ENCODE measurements at regions of chr5 and their contacts with region 1.

Region 1: GRCh38 chr5:62460578-62460983 is 48.0 kb downstream of the IPO11 start:
- DNase-seq: no peak
- ATAC-seq: peak; percentile 53
- H3K4me3 Mint-ChIP-seq: no peak overlapping the region
- H3K27ac Mint-ChIP-seq: no peak overlapping the region
- H3K4me1 Mint-ChIP-seq: no peaks in the 10 kb centered on the region
- H3K27me3 Mint-ChIP-seq: no peaks in the 10 kb centered on the region
- CTCF ChIP-seq: peak; percentile 88

Region 2: GRCh38 chr5:62341783-62342475 is 118.7 kb before region 1 on chr5:
- CTCF ChIA-PET with region 1: no interaction called
- POLR2A ChIA-PET with region 1: no interaction called
- intact Hi-C with region 1: no loop called
- DNase-seq: peak; percentile 44
- ATAC-seq: peak; percentile 75
- H3K4me3 Mint-ChIP-seq: peak overlapping the region; percentile 45
- H3K27ac Mint-ChIP-seq: peak overlapping the region; percentile 92
- H3K4me1 Mint-ChIP-seq: peaks cover 58% of the 10 kb centered on the region
- H3K27me3 Mint-ChIP-seq: no peaks in the 10 kb centered on the region
- CTCF ChIP-seq: no peak

Region 3: DNA sequence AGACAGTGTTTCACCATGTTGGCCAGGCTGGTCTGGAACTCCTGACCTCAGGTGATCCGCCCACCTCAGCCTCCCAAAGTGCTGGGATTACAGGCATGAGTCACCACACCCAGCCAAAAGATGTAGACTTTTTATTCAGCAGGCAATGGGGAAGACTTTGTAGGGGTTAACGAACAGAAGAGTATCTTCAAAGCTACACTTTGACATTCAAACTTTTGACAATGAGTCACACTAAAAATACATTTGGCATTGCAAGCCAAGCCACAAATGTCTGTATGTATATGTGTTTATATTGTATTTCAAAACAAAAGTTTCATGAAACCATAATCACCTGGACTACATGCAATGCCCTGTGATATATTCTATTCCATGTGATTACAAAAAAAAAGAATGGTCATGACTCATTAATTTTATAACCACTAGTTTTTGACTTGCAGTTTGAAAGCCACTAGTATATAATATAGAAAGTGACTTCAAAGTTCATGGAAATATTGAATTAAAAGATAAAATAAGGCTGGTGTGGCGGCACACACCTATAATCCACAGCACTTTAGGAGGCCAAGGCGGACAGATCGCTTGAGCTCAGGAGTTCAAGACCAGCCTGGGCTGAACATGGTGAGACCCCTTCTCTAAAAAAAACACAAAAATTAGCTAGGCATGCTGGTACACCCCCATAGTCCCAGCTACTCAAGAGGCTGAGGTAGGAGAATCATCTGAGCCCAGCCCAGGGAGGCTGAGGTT is 65.2 kb before region 1 on chr5:
- CTCF ChIA-PET with region 1: no interaction called
- POLR2A ChIA-PET with region 1: no interaction called
- intact Hi-C with region 1: no loop called
- DNase-seq: peak; percentile 55
- ATAC-seq: peak; percentile 74
- H3K4me3 Mint-ChIP-seq: no peak overlapping the region
- H3K27ac Mint-ChIP-seq: peak overlapping the region; percentile 88
- H3K4me1 Mint-ChIP-seq: peaks cover 56% of the 10 kb centered on the region
- H3K27me3 Mint-ChIP-seq: no peaks in the 10 kb centered on the region
- CTCF ChIP-seq: no peak

Region 4: DNA sequence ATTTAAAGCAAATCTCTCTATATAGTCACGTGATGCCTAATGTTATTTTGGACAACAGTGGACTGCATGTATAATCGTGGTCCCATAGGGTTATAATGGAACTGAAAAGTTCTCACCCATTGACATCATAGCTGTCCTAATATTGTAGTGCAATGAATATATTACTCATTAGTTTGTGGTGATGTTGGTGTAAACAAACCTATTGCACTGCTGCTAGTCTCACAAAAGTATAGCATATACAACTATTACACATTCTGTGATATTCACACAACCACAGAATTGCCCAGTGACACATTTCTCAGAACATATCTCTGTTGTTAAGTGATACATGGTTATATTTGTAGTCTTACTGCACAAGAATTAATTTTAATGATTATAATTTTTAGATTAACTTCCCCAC is 10.3 kb before region 1 on chr5:
- CTCF ChIA-PET with region 1: interaction called, 21 read pairs
- POLR2A ChIA-PET with region 1: no interaction called
- intact Hi-C with region 1: no loop called
- DNase-seq: no peak
- ATAC-seq: no peak
- H3K4me3 Mint-ChIP-seq: no peak overlapping the region
- H3K27ac Mint-ChIP-seq: no peak overlapping the region
- H3K4me1 Mint-ChIP-seq: no peaks in the 10 kb centered on the region
- H3K27me3 Mint-ChIP-seq: no peaks in the 10 kb centered on the region
- CTCF ChIP-seq: no peak

Region 5: DNA sequence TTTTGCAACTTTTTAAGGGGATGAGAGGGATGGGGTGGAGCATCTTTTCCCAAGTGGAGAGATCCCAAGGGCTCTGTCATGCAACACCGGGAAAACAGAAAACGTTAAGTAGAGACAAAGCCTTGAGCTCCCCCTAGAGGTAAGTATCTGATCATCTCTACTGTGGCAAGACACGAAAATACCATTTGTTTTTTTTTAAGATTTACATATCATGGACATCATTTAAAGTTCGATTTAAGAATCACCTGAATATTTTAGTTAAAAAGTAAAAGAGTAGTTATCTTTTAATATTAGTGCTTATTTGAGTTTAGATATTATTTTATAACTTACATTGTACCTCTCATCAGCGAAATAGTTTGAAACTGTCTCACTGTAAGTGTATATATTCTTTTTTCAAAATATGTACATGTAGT is 318.4 kb after region 1 on chr5:
- CTCF ChIA-PET with region 1: interaction called, 19 read pairs
- POLR2A ChIA-PET with region 1: no interaction called
- intact Hi-C with region 1: loop called (anchors 5 kb)
- DNase-seq: no peak
- ATAC-seq: no peak
- H3K4me3 Mint-ChIP-seq: no peak overlapping the region
- H3K27ac Mint-ChIP-seq: no peak overlapping the region
- H3K4me1 Mint-ChIP-seq: peaks cover 6% of the 10 kb centered on the region
- H3K27me3 Mint-ChIP-seq: no peaks in the 10 kb centered on the region
- CTCF ChIP-seq: peak; percentile 82